ENCODE measurements at regions of chr4 and their contacts with region 1.

Region 1: DNA sequence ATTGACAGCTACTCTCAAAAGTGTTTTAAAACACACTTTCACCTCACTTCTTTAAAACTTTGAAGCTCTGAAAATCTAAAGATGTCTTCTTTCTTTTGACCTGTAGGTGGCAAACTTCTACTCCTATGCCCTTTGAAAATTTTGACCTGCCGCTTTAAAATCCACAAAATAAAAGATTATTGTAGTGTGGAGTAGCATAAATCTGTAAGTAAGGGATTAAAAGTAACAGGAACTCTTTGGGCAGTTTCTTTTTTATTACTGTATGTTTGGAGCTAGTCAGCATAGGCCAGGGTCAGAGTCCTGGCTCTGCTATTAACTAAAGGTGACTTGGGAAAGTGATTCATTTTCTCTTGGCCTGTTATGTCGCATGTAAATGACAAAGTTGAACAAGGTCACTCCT is 25.5 kb downstream of the BBS12 start:
- DNase-seq: peak; percentile 61
- H3K4me3 ChIP-seq: no peak overlapping the region
- CTCF ChIP-seq: peak; percentile 59

Region 2: DNA sequence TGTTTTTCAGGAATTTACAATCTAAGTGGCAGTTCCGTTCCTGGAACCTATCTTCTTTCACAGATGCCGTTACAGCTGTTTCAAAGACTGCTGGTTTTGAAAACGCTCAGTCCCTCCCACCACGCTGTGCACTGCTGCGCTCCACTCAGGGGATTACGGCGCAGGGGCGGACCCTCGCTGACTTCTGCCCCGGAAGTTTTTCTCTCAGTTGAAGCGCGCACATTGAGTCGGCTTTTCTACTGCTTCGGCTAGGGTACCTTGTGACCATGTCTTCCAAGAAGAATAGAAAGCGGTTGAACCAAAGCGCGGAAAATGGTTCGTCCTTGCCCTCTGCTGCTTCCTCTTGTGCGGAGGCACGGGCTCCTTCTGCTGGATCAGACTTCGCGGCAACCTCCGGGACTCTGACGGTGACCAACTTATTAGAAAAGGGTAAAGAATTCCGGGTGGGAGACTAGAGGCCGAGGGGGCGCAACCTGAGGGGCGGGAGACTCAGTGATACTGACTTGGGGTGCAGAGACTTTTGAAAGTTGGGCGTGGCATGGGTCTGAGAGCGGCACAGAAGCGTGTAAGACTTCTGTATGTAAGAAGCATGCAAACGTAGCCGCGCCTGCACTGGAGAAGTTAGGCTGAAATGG is 165.0 kb after region 1 on chr4:
- in situ Hi-C with region 1: loop called (anchors 25 kb)
- DNase-seq: peak; percentile 88
- H3K4me3 ChIP-seq: peak overlapping the region; percentile 95
- CTCF ChIP-seq: no peak

Measured in astrocyte of the spinal cord (primary cell).